CD4-positive, alpha-beta memory T cell (primary cell): ENCODE measurements at regions of chr7 and their contacts with region 1.

Region 1: GRCh38 chr7:158704704-158705468 is at the start of gene NCAPG2:
- DNase-seq: peak; percentile 95 to 97 (median 97)
- H3K4me3 ChIP-seq: peak within 1 kb of the TSS; percentile 81 to 88
- H3K4me3 Mint-ChIP-seq: peak within 1 kb of the TSS; percentile 78 to 94 (median 83)
- H3K27ac ChIP-seq: peak within 1 kb of the TSS; percentile 64
- H3K27ac Mint-ChIP-seq: peak within 1 kb of the TSS; percentile 74 to 87 (median 80)
- H3K4me1 ChIP-seq: peaks cover 34% of the 10 kb centered on the region
- H3K4me1 Mint-ChIP-seq: peaks cover 17 to 32% (median 25%) of the 10 kb centered on the region in 4 donors
- H3K27me3 ChIP-seq: no peaks in the 10 kb centered on the region
- H3K27me3 Mint-ChIP-seq: no peaks in the 10 kb centered on the region
- total RNA-seq, gene NCAPG2: 15.0 to 17.9 TPM

Region 2: GRCh38 chr7:158662610-158663427 is 42.1 kb before region 1 on chr7:
- CTCF ChIA-PET with region 1: no interaction called
- POLR2A ChIA-PET with region 1: no interaction called
- intact Hi-C with region 1: loop called (anchors 2 kb)
- DNase-seq: peak in 4 of 5 donors; percentile 15 to 32 (median 22)
- H3K4me3 ChIP-seq: no peak overlapping the region
- H3K4me3 Mint-ChIP-seq: peak overlapping the region; percentile 32 to 80 (median 74)
- H3K27ac ChIP-seq: peak overlapping the region; percentile 13
- H3K27ac Mint-ChIP-seq: peak overlapping the region; percentile 61 to 89 (median 84)
- H3K4me1 ChIP-seq: peaks cover 8% of the 10 kb centered on the region
- H3K4me1 Mint-ChIP-seq: peaks cover 5 to 22% (median 13%) of the 10 kb centered on the region in 4 donors
- H3K27me3 ChIP-seq: no peaks in the 10 kb centered on the region
- H3K27me3 Mint-ChIP-seq: no peaks in the 10 kb centered on the region

Region 3: GRCh38 chr7:158760936-158761335 is 56.0 kb after region 1 on chr7:
- CTCF ChIA-PET with region 1: interaction called, 3 read pairs
- POLR2A ChIA-PET with region 1: no interaction called
- intact Hi-C with region 1: loop called (anchors 10 kb)
- DNase-seq: peak in 2 of 5 donors; percentile 19 to 24
- H3K4me3 ChIP-seq: no peak overlapping the region
- H3K4me3 Mint-ChIP-seq: no peak overlapping the region
- H3K27ac ChIP-seq: no peak overlapping the region
- H3K27ac Mint-ChIP-seq: peak overlapping the region in 5 of 7 donors; percentile 5 to 82 (median 56)
- H3K4me1 ChIP-seq: no peaks in the 10 kb centered on the region
- H3K4me1 Mint-ChIP-seq: peaks cover 0 to 8% (median 1%) of the 10 kb centered on the region in 4 donors
- H3K27me3 ChIP-seq: no peaks in the 10 kb centered on the region
- H3K27me3 Mint-ChIP-seq: no peaks in the 10 kb centered on the region

Region 4: DNA sequence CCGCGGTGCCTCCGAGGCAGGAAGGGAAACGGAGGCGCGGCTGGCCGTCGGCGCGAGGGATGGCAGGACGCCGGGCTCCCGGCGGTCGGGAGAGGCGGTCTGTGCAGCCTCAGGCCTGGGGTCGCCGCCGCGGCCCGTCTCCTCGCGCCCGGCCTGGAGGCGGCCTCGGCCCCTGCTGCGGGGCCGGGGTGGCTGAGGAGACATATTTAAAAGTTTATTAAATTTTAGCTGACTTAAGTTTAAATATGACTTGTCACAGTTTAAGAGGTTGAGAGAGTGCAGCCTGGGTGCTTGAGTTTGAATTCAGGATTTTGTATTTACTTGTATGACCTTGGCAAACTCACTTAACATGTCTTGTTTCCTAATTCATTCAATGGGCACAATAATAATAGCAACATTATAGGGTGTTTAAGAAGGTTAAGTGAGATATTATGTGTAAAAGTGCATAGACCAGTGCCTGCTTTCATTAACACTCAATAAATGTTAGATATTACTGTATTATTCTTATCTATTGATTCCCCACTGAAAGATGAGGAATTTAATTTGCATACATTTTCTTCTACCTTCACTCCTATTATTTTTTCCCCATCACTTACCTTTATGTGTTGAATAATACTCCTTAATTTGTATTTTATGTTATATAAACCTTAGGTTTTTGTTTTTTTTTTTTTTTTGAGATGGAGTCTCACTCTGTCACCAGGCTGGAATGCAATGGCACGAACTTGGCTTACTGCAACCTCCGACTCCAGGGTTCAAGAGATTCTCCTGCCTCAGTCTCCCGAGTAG is 152.2 kb after region 1 on chr7:
- CTCF ChIA-PET with region 1: no interaction called
- POLR2A ChIA-PET with region 1: interaction called, 9 read pairs
- intact Hi-C with region 1: loop called (anchors 1 kb)
- DNase-seq: peak in 1 of 5 donors; percentile 6
- H3K4me3 ChIP-seq: peak overlapping the region; percentile 80 to 81
- H3K4me3 Mint-ChIP-seq: peak overlapping the region; percentile 75 to 98 (median 90)
- H3K27ac ChIP-seq: peak overlapping the region; percentile 77
- H3K27ac Mint-ChIP-seq: peak overlapping the region; percentile 46 to 92 (median 79)
- H3K4me1 ChIP-seq: peaks cover 19% of the 10 kb centered on the region
- H3K4me1 Mint-ChIP-seq: peaks cover 18 to 34% (median 23%) of the 10 kb centered on the region in 4 donors
- H3K27me3 ChIP-seq: no peaks in the 10 kb centered on the region
- H3K27me3 Mint-ChIP-seq: no peaks in the 10 kb centered on the region